A673 (cell line): ENCODE measurements at regions of chr2 and their contacts with region 1.

Region 1: DNA sequence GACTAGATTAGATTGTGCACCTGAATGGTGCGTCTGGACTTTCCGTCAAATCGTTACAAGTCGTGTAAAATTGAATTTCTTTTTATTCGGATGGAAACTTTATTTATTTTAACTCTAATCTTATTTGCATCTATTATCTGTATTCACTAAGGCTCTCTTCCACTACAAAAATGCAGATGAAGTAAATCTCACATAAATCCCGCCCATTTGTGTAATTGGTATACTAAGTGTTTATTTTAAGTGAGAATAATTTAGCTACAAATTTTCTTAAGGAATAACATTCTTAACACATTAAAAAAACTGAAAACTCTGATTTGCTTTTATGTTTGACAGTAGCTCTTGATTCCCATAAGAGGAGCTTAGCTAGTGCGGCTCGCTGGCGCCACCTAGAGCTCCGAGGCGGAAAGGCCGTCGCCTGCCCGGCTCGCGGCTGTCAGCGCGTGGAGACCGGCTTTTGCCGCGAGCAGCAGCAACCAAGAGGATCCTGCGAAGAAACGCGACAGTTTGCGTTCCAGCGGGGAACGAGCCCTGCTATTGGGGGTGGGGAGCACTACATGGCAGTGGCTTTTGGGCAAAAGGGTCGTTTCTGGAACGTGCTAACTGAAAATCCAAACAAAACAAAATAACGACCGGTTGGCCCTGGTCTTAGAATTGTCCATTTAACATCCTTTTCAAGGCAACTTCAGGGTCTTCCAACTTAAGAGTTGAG is 6.7 kb downstream of the SP9 start:
- DNase-seq: peak; percentile 91
- H3K4me3 ChIP-seq: peak overlapping the region; percentile 41
- H3K27ac ChIP-seq: no peak overlapping the region
- H3K4me1 ChIP-seq: peaks cover 25% of the 10 kb centered on the region
- H3K27me3 ChIP-seq: peaks cover 68% of the 10 kb centered on the region
- CTCF ChIP-seq: peak; percentile 99

Region 2: DNA sequence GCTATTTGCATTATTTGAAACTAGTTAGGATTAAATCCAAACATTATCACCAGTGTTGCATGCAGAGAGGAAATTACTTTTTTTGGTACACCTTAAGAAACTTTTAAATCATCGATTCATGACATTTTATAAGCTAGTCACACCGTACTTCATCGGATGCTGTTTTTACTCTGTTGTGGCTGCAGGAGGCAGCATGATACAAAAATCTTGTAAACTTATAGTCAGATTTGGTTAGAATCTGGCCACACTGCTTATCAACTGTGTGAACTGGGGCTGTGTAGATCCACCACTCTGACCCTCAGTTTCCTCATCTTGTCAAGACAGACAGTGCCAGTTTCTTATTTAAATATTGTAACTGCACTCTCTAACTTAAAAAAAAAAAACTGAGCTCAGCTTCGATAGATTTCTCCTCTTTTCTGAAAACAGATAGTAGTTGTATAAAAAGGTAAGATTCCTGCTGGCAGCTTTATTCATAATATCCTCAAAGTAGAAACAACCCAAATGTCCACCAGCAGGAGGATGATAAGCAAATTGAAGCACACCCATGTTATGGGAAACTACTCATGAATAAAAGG is 1528.0 kb before region 1 on chr2:
- CTCF ChIA-PET with region 1: no interaction called
- POLR2A ChIA-PET with region 1: no interaction called
- intact Hi-C with region 1: loop called (anchors 10 kb)
- DNase-seq: peak; percentile 26
- H3K4me3 ChIP-seq: no peak overlapping the region
- H3K27ac ChIP-seq: no peak overlapping the region
- H3K4me1 ChIP-seq: no peaks in the 10 kb centered on the region
- H3K27me3 ChIP-seq: peaks cover 11% of the 10 kb centered on the region
- CTCF ChIP-seq: peak; percentile 50; the same call in 1 of the 2 replicates

Region 3: DNA sequence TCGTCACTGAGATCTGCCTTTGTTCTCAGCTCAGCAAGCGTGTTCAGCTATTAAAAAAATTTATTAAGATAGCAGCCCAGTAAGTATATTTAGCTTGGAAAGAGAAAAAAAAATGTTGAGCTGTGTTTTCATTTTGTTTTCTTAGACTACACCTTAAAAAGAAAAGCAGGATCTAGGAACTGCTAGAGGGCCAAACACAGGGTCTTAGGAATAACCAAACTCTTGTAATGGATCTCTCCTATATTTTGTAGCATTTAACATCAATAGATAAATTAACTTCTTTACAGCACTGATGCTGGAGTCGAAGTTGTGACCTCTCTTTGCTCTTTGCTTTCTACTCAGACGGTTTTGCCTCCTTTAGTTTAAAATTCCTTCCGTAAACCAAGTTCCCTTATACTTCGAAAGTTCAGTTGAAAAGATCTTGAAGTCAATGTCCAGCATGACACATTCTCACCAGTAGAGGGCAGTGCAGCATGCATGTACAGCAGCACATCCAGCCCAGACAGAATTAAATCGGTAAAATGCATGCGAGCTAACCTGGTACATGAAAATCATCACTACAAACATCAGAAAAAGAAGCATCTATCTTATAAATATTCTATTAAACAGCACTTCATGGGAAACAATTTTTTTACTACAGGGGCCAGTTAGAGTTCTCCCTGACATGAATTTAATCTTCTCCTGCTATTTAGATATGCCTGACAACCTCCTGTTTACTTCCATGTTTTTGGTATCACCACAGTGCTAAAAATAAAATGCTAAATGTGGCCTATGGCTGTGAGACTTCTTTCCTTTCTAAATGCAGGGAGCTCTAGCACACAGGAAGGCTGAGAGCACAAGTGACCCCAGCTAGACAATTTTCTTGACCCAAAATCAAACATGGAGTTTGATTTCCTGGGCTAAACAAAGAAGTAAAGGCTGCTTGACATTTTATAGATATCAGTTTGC is 1314.0 kb before region 1 on chr2:
- CTCF ChIA-PET with region 1: no interaction called
- POLR2A ChIA-PET with region 1: no interaction called
- intact Hi-C with region 1: loop called (anchors 10 kb)
- DNase-seq: peak; percentile 87
- H3K4me3 ChIP-seq: no peak overlapping the region
- H3K27ac ChIP-seq: no peak overlapping the region
- H3K4me1 ChIP-seq: no peaks in the 10 kb centered on the region
- H3K27me3 ChIP-seq: no peaks in the 10 kb centered on the region
- CTCF ChIP-seq: peak; percentile 94

Region 4: GRCh38 chr2:173286153-173286809 is 1055.2 kb before region 1 on chr2:
- CTCF ChIA-PET with region 1: no interaction called
- POLR2A ChIA-PET with region 1: interaction called, 10 read pairs
- intact Hi-C with region 1: no loop called
- DNase-seq: peak; percentile 14
- H3K4me3 ChIP-seq: no peak overlapping the region
- H3K27ac ChIP-seq: no peak overlapping the region
- H3K4me1 ChIP-seq: no peaks in the 10 kb centered on the region
- H3K27me3 ChIP-seq: no peaks in the 10 kb centered on the region
- CTCF ChIP-seq: peak; percentile 27; the same call in 1 of the 2 replicates

Region 5: DNA sequence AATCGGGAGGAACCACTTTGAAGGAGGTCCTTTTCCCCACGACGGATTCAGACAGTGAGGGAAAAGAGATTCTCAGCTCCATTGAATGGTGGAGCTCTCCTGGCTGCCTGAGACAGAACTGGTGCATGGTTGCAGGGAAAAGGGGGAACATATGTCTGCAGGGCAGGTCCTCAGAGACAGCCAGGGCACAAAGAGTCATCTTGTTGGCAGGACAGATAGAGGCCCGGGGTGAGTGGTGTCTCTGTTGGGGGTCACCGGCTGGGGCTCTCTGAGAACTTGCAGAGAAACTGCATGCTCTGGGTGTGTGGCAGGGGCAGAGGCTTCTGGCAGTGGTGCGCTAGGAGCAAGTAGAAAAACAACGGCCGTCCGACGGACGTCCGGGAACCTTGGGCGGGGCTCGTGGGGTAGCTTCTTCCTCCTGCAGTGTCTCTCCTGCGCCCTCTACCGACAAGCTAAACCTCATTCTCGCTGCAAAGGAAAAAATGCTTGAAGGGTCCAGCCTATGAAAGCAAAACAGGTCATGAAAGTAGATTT is 892.4 kb before region 1 on chr2:
- CTCF ChIA-PET with region 1: no interaction called
- POLR2A ChIA-PET with region 1: no interaction called
- intact Hi-C with region 1: loop called (anchors 5 kb)
- DNase-seq: peak; percentile 92
- H3K4me3 ChIP-seq: peak overlapping the region; percentile 41
- H3K27ac ChIP-seq: no peak overlapping the region
- H3K4me1 ChIP-seq: no peaks in the 10 kb centered on the region
- H3K27me3 ChIP-seq: peaks cover 14% of the 10 kb centered on the region
- CTCF ChIP-seq: peak; percentile 89

Region 6: DNA sequence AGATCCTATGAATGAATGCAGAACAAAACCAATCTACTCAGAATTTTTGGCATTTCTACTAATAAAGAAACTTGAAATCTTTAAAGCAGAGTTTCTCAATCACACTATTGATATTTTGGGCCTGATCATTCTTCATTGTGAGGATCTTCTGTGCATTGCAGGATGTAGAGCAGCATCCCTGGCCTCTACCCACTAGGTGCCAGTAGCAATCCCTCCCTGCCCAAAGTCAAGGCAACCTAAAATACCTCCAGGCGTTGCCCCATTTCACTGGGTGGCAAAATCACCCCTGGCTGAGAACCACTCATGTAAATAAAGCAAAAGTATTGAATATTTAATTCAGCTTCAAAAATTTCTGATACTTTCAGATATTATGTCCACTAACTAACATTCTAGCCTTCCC is 589.3 kb before region 1 on chr2:
- CTCF ChIA-PET with region 1: no interaction called
- POLR2A ChIA-PET with region 1: no interaction called
- intact Hi-C with region 1: loop called (anchors 10 kb)
- DNase-seq: peak; percentile 28
- H3K4me3 ChIP-seq: no peak overlapping the region
- H3K27ac ChIP-seq: no peak overlapping the region
- H3K4me1 ChIP-seq: peaks cover 11% of the 10 kb centered on the region
- H3K27me3 ChIP-seq: no peaks in the 10 kb centered on the region
- CTCF ChIP-seq: peak; percentile 44; the same call in 1 of the 2 replicates

Region 7: GRCh38 chr2:173965329-173966025 is 376.0 kb before region 1 on chr2 and contains the start of gene SP3:
- CTCF ChIA-PET with region 1: no interaction called
- POLR2A ChIA-PET with region 1: no interaction called
- intact Hi-C with region 1: loop called (anchors 5 kb)
- DNase-seq: peak; percentile 98
- H3K4me3 ChIP-seq: peak within 1 kb of the TSS; percentile 93
- H3K27ac ChIP-seq: peak within 1 kb of the TSS; percentile 99
- H3K4me1 ChIP-seq: peaks cover 7% of the 10 kb centered on the region
- H3K27me3 ChIP-seq: no peaks in the 10 kb centered on the region
- CTCF ChIP-seq: no peak
- total RNA-seq, gene SP3: 84.5 and 90.8 TPM in 2 replicates